ENCODE measurements at regions of chr19 and their contacts with region 1.

Region 1: DNA sequence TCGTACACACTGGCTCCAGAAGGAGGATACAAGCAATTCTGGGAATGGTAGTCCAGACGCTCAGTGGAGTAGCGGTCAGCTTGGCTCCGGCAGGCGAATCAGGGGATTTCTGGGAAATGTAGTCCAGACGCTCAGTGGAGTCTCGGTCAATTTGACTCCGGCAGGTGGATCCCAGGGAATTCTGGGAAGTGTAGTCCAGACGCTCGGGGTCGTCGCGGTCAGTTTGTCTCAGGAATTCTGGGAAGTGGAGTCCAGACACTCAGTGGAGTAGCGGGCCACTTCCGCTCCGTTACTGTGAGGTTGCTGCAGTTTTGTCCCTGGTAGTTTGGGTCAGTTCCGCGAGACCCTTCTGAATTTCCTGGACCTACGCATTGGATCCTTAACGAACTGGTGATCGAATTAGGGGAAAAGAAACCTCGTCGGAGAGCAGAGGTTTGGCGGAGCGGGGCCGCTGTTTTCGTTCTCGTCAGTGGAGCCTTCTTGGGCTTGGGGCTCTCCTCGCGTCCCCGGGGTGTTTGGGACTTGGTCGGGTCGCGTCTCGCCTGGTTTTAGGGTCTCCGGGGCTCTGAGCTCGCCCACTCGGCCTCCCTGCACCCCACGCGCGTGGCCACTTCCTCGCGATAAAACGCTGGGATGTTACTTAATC is at the start of gene ZNF225:
- DNase-seq: peak; percentile 96 to 99 (median 97)
- ATAC-seq: peak; percentile 99
- H3K4me3 ChIP-seq: peak within 1 kb of the TSS; percentile 70 to 72
- H3K27ac ChIP-seq: peak within 1 kb of the TSS; percentile 13 to 67 (median 52)
- H3K4me1 ChIP-seq: peaks cover 22% of the 10 kb centered on the region
- H3K27me3 ChIP-seq: no peaks in the 10 kb centered on the region
- CTCF ChIP-seq: peak in 3 of 7 experiments; percentile 23 to 39 (median 28)
- POLR2A ChIP-seq: peak in 2 of 3 donors; percentile 48 to 50
- total RNA-seq, gene ZNF225: 2.0 to 2.9 TPM

Region 2: DNA sequence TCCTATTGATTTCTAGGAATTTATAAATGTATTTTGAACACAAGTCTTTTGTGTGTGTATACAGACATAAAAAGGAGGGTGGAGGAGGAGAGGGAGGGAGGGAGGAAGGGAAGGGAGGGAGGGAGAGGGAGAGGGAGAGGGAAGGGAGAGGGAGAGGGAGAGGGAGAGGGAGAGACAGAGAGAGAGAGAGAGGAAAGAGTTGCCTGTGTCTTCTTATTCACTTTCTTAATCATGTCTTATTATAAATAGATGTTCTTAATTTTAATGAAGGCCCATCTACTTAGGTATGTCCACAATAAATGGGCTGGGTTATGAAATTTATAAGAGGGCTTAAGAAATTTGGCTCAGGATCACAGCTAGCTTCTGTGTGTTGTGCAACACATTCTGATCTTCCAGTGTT is 217.5 kb before region 1 on chr19:
- intact Hi-C with region 1: no loop called
- DNase-seq: no peak
- ATAC-seq: no peak
- H3K4me3 ChIP-seq: no peak overlapping the region
- H3K27ac ChIP-seq: no peak overlapping the region
- H3K4me1 ChIP-seq: peaks cover under 1% of the 10 kb centered on the region
- H3K27me3 ChIP-seq: no peaks in the 10 kb centered on the region
- CTCF ChIP-seq: no peak
- POLR2A ChIP-seq: no peak

Region 3: DNA sequence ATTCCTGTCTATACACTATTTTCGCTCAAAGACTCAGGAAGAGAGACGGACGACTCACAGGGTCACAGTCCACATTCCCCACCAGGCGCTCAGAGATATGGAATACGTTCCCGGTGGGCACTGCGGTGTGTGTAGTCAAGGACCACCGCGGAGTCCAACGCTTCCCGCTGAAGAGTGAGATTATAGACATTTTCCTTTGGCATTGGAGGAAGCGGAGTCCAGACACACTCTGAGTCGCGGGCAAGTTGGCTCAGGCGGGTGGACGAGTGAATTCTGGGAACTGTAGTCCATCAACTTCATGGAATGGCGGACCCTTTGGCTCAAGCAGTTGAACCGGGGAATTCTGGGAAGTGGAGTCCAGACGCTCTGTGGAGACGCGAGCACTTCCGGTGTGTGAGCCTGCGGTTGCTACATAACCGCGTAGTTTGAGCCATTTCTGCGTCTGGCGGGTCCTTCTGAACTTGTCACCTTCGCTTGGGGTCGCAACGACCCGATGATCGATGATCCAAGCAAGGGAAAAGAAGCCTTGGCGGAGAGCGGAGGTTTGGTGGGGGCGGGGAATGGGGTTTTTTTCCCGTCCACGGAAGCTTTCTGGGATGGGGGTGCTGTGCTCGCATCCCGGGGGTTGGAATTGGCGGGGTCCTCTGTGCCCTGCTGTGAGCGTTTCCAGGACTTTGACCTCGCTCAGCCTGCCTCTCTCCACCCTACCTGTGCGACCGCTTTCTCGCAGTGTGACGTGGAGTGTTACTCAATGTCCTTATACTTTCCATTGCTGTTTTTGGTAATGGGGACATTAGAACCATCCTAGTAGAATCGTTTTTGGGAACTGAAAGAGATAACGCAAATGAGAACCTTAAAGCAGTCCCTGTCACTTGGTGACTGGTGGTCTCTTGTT is 110.4 kb before region 1 on chr19 and contains the start of gene ZNF230:
- intact Hi-C with region 1: loop called (anchors 10 kb)
- DNase-seq: peak; percentile 91 to 97 (median 93)
- ATAC-seq: peak; percentile 100
- H3K4me3 ChIP-seq: peak within 1 kb of the TSS; percentile 77 to 80
- H3K27ac ChIP-seq: peak within 1 kb of the TSS; percentile 55 to 79 (median 61)
- H3K4me1 ChIP-seq: peaks cover 13% of the 10 kb centered on the region
- H3K27me3 ChIP-seq: no peaks in the 10 kb centered on the region
- CTCF ChIP-seq: no peak
- POLR2A ChIP-seq: peak in 2 of 3 donors; percentile 46 to 51
- total RNA-seq, gene ZNF230: 2.9 TPM in 1 of 2 donors, not detected in the other

Region 4: DNA sequence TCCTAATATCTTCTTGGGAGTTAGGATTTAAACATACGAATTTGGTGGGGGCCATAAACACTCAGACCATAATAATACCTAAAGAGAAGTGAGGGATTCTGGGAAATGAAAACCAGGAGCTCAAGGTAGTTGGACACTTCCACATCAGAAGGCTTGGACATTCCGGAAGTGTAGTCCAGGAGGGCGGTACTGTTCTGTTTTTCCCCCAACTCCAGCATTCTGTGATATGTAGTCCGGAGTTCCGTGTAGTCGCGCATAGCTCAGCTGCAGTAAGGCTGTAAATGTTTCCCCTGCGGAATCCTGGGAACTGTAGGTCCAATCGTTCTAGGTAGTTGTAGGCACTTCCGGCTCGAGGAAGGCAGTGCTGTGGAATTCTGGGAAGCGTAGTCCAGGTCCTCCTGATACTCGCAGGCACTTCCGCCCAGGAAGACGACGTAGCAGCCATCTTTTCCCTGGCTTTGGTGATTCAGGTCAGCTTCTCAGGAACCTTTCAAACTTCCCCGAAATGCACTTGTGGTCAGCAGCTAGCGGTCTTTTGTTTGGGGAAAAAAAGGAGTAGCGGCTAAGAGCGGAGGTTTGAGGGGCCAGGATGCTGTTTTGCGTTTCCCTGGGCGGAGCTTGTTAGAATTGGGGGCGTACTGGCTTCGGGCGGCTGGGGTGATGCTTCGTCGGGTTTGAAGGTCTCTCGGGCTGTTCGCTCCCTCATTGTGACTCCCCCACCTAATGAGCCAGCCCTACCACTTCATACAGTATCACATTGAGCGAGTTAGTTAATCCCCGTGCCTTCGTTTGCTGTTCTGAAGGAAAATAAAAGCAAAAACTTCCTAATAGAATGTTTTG is 51.6 kb after region 1 on chr19 and contains the start of gene ZNF226:
- intact Hi-C with region 1: loop called (anchors 10 kb)
- DNase-seq: peak; percentile 91 to 98 (median 95)
- ATAC-seq: peak; percentile 99
- H3K4me3 ChIP-seq: peak within 1 kb of the TSS; percentile 46 to 78
- H3K27ac ChIP-seq: peak within 1 kb of the TSS; percentile 20 to 81 (median 60)
- H3K4me1 ChIP-seq: peaks cover 13% of the 10 kb centered on the region
- H3K27me3 ChIP-seq: no peaks in the 10 kb centered on the region
- CTCF ChIP-seq: peak in 1 of 7 experiments; percentile 6
- POLR2A ChIP-seq: peak in 2 of 3 donors; percentile 42 to 53
- total RNA-seq, gene ZNF226: 4.6 to 13.5 TPM